ENCODE measurements at regions of chr1 and their contacts with region 1.

Region 1: DNA sequence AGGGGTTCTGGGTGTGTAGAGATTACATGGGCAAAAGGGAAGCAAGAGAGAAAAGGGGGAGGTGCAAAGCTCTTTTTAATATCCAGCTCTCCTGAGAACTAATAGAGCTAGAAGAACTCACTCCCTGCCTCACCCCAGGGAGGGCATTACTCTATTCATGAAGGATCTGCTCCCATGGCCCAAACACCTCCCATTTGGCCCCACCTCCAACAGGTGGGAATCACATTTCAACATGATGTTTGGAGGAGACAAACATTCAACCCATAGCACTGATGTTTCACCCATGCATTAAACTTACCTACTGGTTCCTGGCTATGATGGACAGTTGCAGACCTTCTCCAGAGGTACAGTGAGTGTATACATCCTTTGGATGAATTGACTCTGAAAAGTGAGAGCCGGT is 7.3 kb upstream of the JUN start:
- DNase-seq: no peak
- ATAC-seq: no peak
- H3K4me3 ChIP-seq: no peak overlapping the region
- H3K4me3 Mint-ChIP-seq: no peak overlapping the region
- H3K27ac ChIP-seq: no peak overlapping the region
- H3K27ac Mint-ChIP-seq: no peak overlapping the region
- H3K4me1 ChIP-seq: no peaks in the 10 kb centered on the region
- H3K4me1 Mint-ChIP-seq: peaks cover 58% of the 10 kb centered on the region
- H3K27me3 ChIP-seq: no peaks in the 10 kb centered on the region
- H3K27me3 Mint-ChIP-seq: no peaks in the 10 kb centered on the region
- CTCF ChIP-seq: no peak

Region 2: GRCh38 chr1:58809325-58809972 is 18.3 kb after region 1 on chr1:
- CTCF ChIA-PET with region 1: no interaction called
- POLR2A ChIA-PET with region 1: no interaction called
- intact Hi-C with region 1: loop called in 1 of 2 experiments (anchors 2 kb)
- DNase-seq: no peak
- ATAC-seq: no peak
- H3K4me3 ChIP-seq: no peak overlapping the region
- H3K4me3 Mint-ChIP-seq: no peak overlapping the region
- H3K27ac ChIP-seq: no peak overlapping the region
- H3K27ac Mint-ChIP-seq: peak overlapping the region; percentile 60
- H3K4me1 ChIP-seq: peaks cover 19% of the 10 kb centered on the region
- H3K4me1 Mint-ChIP-seq: peaks cover 32% of the 10 kb centered on the region
- H3K27me3 ChIP-seq: no peaks in the 10 kb centered on the region
- H3K27me3 Mint-ChIP-seq: no peaks in the 10 kb centered on the region
- CTCF ChIP-seq: no peak

Region 3: DNA sequence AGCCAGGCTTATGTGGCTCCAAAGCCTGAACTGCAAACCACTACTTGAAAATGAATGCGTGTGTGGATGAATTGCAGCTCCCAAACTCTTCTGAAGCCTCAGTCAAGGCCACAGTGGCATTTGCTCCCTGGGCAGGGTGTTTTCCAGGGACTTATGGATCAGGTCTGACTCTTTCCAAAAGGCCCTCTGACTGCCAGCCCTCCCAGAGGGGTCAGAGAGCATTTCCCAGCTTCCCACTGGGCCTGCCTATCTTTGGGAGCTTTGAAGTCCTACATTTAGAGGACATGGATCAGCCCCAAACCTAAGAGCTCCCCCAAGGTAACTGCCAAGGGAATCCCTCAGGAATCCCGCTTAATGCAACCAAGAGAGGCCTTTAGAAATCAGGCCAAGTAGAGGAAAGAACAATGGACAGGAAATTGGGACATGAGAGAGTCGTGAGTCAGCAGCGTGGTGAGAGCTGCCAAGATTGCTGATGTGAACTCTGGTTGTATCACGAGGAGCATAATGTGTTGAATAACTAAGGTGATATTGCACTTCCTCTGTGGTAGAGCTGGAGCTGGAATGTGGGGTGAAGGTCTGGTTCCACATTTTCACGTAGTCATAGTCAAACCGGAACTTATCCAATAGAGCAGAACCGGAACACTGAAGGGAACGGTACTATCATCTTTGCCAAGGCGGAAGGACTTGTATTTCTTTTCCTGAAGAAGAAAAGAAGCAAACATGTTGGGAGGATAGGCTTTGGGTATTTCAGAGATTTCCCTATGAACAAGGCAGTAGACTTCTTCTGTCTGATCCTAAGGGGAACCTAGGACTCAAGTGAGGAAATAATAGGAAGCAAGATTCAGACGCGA is 92.2 kb after region 1 on chr1:
- CTCF ChIA-PET with region 1: no interaction called
- POLR2A ChIA-PET with region 1: no interaction called
- intact Hi-C with region 1: no loop called
- DNase-seq: peak in 1 of 9 experiments; percentile 37
- ATAC-seq: no peak
- H3K4me3 ChIP-seq: no peak overlapping the region
- H3K4me3 Mint-ChIP-seq: no peak overlapping the region
- H3K27ac ChIP-seq: no peak overlapping the region
- H3K27ac Mint-ChIP-seq: no peak overlapping the region
- H3K4me1 ChIP-seq: peaks cover 31% of the 10 kb centered on the region
- H3K4me1 Mint-ChIP-seq: peaks cover 46% of the 10 kb centered on the region
- H3K27me3 ChIP-seq: no peaks in the 10 kb centered on the region
- H3K27me3 Mint-ChIP-seq: no peaks in the 10 kb centered on the region
- CTCF ChIP-seq: no peak

Measured in CD8-positive, alpha-beta T cell (primary cell).